ENCODE measurements at regions of chr4 and their contacts with region 1.

Region 1: GRCh38 chr4:27534488-27534887 is 673.8 kb downstream of the STIM2 start:
- DNase-seq: no peak

Region 2: DNA sequence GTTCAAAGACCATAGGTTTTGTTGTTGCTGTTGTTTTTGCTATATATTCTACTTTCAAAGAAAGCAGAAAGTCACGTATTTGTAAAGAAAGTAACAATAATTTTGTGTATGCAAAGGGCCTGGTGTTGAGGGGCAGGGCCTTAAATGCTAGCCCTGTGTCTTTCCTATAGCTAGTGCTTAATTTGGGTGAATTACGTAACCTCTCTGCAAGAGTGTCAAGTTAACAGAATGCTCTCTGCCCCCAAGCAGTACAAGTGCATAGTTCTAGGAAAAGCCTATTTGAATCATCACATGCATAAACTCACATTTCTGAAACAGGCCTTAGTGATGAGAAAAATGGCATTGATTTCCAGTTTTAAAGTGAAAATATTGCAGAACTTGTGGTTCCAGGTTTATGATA is 10.3 kb before region 1 on chr4:
- intact Hi-C with region 1: loop called in 1 of 2 experiments (anchors 1 kb)
- DNase-seq: no peak

Region 3: DNA sequence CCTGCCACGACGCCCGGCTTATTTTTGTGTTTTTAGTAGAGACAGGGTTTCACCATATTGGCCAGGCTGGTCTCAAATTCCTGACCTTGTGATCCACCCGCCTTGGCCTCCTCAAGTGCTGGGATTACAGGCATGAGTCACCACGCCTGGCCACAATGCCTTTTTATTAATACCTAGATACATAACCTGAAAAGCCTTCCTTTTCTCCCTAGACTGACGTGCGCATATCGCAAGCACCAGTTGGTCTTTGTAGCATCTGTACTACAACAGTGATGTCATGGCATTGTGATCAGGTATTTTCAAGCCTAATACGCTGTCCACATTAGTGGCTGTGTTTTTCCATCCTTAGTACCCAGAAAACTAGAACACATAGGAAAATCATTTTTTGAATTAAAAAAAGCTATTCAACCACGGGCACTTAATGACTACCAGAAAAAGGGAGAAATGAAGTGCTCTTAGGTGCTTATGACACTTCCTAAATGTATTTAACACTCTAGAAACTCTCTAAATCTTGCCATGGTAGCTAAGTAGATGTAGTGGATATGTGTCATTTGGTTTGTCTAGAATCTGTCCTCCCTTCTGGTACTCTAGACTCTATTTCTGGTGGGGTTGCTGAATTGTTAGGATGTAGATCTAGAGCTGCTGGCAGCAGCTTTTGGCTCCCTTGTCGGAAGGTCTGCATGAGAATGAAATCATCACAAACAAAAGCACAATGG is 33.9 kb after region 1 on chr4:
- intact Hi-C with region 1: loop called in 1 of 2 experiments (anchors 1 kb)
- DNase-seq: no peak

Measured in posterior vena cava (tissue), 2 donors.